ENCODE measurements at regions of chr5 and their contacts with region 1.

Region 1: GRCh38 chr5:134586866-134587524 is 45.6 kb downstream of the SAR1B start:
- DNase-seq: no peak
- H3K4me3 ChIP-seq: no peak overlapping the region
- CTCF ChIP-seq: peak; percentile 90

Region 2: GRCh38 chr5:134296213-134296612 is 290.8 kb before region 1 on chr5:
- CTCF ChIA-PET with region 1: interaction called, 445 read pairs
- POLR2A ChIA-PET with region 1: no interaction called
- DNase-seq: no peak
- H3K4me3 ChIP-seq: no peak overlapping the region
- CTCF ChIP-seq: no peak

Region 3: DNA sequence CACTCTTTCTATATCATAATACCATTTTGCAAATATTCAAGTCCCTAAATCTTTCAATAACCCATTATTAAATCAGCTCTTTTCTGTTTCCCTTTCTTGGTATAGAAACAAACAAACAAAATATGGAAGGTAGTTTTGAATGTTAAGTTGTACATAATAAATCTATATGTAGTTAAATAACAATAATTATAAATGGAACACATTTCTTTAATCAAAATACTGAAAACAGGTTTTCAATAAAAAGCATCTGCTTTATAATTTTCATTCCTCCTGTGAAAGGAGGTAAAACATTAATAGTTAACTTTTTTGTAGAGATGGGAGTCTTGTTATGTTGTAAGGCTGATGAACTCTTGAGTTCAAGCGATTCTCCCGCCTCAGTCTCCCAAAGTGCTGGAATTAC is 274.2 kb before region 1 on chr5:
- CTCF ChIA-PET with region 1: interaction called, 445 read pairs
- POLR2A ChIA-PET with region 1: no interaction called
- DNase-seq: no peak
- H3K4me3 ChIP-seq: no peak overlapping the region
- CTCF ChIP-seq: no peak

Region 4: GRCh38 chr5:134394932-134395331 is 192.1 kb before region 1 on chr5:
- CTCF ChIA-PET with region 1: interaction called, 12 read pairs
- POLR2A ChIA-PET with region 1: no interaction called
- DNase-seq: no peak
- H3K4me3 ChIP-seq: no peak overlapping the region
- CTCF ChIP-seq: no peak

Region 5: GRCh38 chr5:134411546-134412266 is 175.3 kb before region 1 on chr5 and contains the start of gene CDKN2AIPNL:
- CTCF ChIA-PET with region 1: interaction called, 25 read pairs
- POLR2A ChIA-PET with region 1: interaction called, 3 read pairs
- DNase-seq: peak; percentile 16
- H3K4me3 ChIP-seq: peak within 1 kb of the TSS; percentile 92
- CTCF ChIP-seq: peak; percentile 93

Region 6: GRCh38 chr5:134561871-134562296 is 25.1 kb before region 1 on chr5:
- CTCF ChIA-PET with region 1: interaction called, 11 read pairs
- POLR2A ChIA-PET with region 1: no interaction called
- DNase-seq: no peak
- H3K4me3 ChIP-seq: no peak overlapping the region
- CTCF ChIP-seq: peak; percentile 55

Region 7: GRCh38 chr5:134714120-134714519 is 127.1 kb after region 1 on chr5:
- CTCF ChIA-PET with region 1: no interaction called
- POLR2A ChIA-PET with region 1: no interaction called
- DNase-seq: no peak
- H3K4me3 ChIP-seq: no peak overlapping the region
- CTCF ChIP-seq: no peak

Region 8: DNA sequence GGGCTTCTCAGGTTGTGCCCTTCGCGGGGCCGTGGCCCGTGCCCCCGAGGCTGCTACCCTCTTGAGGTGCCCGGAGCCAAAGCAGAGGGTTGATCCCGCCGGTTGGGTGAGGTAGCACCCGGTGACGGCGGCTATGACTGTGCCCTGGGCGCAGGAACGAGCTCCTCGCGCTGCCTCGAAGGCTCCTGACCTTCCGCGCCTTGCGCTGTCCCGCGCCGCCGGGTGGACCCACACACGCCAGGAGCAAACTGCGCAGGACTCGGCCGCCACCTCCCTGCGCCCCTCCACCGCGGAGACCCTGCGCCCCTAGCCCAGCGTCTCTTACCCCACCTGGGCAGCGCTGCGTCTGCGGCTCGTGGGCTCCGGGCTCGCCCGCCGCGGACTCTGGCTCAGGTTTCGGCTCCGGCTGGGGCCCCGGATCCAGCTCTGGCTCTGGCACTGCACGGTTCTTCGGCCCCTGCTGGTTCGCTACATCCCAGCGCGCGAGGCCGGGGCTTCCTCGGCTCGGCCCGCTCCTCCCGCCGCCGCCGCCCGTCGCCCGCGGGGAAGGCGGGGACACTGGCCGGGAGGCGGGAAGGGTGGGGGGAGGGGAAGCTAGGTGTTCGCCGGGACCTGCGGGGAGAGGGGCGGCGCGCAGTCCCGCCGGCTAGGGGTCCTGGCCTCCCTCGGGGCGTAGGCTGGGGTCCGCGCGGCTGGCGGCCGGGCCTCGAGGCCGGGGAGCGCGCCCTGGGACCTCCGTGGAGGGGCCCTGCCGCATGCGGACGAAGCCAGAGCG is 452.5 kb after region 1 on chr5:
- CTCF ChIA-PET with region 1: no interaction called
- POLR2A ChIA-PET with region 1: no interaction called
- DNase-seq: no peak
- H3K4me3 ChIP-seq: peak overlapping the region; percentile 39
- CTCF ChIP-seq: no peak

Measured in AG04449 (cell line).